CD8-positive, alpha-beta T cell (primary cell): ENCODE measurements at regions of chr14 and their contacts with region 1.

Region 1: DNA sequence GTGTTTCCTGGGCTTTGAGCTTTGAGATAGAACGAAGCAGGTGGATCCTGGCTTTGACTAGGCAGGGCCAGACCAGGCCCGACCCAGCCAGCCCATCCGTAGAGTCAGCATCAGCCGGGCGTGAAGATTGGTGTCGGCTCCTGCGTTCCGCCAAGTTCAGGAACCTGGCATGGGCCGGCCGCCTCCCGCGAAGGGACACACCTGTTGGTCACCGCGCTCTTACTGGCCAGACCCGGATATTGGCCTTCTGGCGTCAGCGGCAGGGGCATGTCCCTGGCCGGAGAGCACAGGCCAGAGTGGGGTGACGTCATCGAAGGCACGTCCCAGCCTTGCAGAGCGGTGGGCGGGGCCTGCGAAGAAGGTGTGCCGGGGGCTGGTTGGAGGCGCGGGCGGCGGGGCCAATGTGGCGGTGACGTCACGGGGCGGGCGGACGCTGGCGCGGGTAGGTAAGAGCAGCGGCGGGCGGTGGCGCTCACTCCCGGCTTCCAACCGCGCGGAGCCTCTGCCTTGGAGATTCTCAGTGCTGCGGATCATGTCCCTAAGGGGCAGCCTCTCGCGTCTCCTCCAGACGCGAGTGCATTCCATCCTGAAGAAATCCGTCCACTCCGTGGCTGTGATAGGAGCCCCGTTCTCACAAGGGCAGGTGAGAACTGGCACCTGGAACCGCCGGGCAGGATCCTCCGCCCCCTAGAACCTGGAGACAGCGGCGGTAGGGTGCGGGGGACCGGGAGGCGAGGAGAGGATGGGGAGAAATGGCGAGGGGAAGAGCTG is at the start of gene ARG2:
- DNase-seq: peak; percentile 92 to 99 (median 97)
- ATAC-seq: peak; percentile 89
- H3K4me3 ChIP-seq: peak within 1 kb of the TSS; percentile 73 to 90
- H3K4me3 Mint-ChIP-seq: peak within 1 kb of the TSS; percentile 88
- H3K27ac ChIP-seq: peak within 1 kb of the TSS; percentile 78 to 86
- H3K27ac Mint-ChIP-seq: peak within 1 kb of the TSS; percentile 86
- H3K4me1 ChIP-seq: peaks cover 17% of the 10 kb centered on the region
- H3K4me1 Mint-ChIP-seq: peaks cover 32% of the 10 kb centered on the region
- H3K27me3 ChIP-seq: no peaks in the 10 kb centered on the region
- H3K27me3 Mint-ChIP-seq: peaks cover 2% of the 10 kb centered on the region
- CTCF ChIP-seq: no peak
- total RNA-seq, gene ARG2: 1.5 to 3.7 TPM

Region 2: DNA sequence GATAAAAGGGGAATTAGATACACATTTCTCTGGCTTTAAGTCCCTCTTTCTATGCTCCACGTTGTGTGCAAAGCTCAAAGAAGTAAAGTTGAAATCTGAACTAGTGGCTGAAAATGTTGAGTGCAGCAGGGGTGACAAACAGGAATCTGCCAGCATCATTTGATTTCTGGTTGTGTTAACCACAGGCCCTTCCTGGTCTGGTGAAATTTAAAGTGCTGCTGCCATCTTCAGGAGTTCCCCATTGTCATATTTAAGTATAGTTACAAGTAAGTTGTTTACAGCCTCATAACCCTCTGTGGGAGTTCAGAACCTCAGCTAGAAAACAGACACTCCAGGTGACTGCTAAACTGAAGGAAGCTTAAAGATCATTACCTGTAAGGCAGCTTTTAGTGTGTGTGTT is 1224.3 kb before region 1 on chr14:
- CTCF ChIA-PET with region 1: no interaction called
- POLR2A ChIA-PET with region 1: no interaction called
- intact Hi-C with region 1: no loop called
- DNase-seq: peak in 2 of 9 experiments; percentile 52 to 70
- ATAC-seq: peak; percentile 59
- H3K4me3 ChIP-seq: no peak overlapping the region
- H3K4me3 Mint-ChIP-seq: no peak overlapping the region
- H3K27ac ChIP-seq: no peak overlapping the region
- H3K27ac Mint-ChIP-seq: peak overlapping the region; percentile 30
- H3K4me1 ChIP-seq: peaks cover 5% of the 10 kb centered on the region
- H3K4me1 Mint-ChIP-seq: peaks cover 6% of the 10 kb centered on the region
- H3K27me3 ChIP-seq: no peaks in the 10 kb centered on the region
- H3K27me3 Mint-ChIP-seq: no peaks in the 10 kb centered on the region
- CTCF ChIP-seq: no peak

Region 3: GRCh38 chr14:67240978-67241414 is 378.6 kb before region 1 on chr14:
- CTCF ChIA-PET with region 1: no interaction called
- POLR2A ChIA-PET with region 1: no interaction called
- intact Hi-C with region 1: loop called in 1 of 2 experiments (anchors 5 kb)
- DNase-seq: peak; percentile 81 to 96 (median 91)
- ATAC-seq: peak; percentile 93
- H3K4me3 ChIP-seq: peak overlapping the region; percentile 65 to 76
- H3K4me3 Mint-ChIP-seq: peak overlapping the region; percentile 91
- H3K27ac ChIP-seq: peak overlapping the region; percentile 62
- H3K27ac Mint-ChIP-seq: peak overlapping the region; percentile 82
- H3K4me1 ChIP-seq: peaks cover 14% of the 10 kb centered on the region
- H3K4me1 Mint-ChIP-seq: peaks cover 29% of the 10 kb centered on the region
- H3K27me3 ChIP-seq: no peaks in the 10 kb centered on the region
- H3K27me3 Mint-ChIP-seq: no peaks in the 10 kb centered on the region
- CTCF ChIP-seq: no peak

Region 4: DNA sequence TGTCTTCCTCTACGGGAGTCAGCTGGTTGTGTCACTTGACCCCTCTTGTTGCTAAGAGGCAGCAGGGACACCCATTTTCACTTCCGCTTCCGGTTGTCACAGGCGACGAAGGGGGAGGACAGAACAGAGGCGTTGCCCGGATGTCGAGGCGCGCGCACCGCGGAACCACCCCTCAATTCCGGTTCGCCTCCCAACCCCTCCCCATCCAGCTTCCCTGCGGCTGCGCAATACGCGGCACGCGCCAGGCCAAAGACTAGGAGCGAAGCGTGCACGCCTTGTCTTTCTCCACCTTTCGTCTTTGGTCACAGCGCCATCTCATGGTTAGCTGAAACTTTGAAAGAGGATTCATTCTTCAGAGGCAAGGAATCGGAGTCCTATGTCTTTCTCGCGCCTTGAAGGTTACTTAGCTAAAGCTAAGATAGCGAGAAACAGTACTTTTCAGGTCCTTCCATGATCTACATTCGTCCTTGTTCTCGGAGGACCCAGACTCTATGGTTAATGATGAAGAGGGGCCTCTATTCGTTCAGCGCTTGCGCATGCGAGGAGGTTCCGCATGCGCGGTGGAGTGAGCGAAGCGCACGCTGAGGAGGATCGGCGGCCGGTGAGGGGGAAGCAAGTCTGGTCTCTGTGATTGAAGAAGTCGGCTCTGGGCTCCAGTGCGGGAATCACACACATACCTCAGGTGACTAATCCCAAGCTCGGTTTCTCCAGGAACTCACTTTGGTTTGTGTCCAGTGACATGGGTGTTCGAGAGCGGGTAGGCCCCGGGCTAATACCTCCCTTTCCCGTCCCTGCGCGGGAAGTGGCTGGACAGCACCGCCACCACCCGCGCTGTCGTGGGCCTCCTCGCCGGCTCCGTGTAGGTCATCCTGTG is 259.6 kb before region 1 on chr14 and contains the starts of genes ATP6V1D and EIF2S1:
- CTCF ChIA-PET with region 1: no interaction called
- POLR2A ChIA-PET with region 1: no interaction called
- intact Hi-C with region 1: loop called in 1 of 2 experiments (anchors 1 kb)
- DNase-seq: peak; percentile 99 to 100 (median 99)
- ATAC-seq: peak; percentile 93
- H3K4me3 ChIP-seq: peak within 1 kb of the TSS; percentile 79 to 87
- H3K4me3 Mint-ChIP-seq: peak within 1 kb of the TSS; percentile 99
- H3K27ac ChIP-seq: peak within 1 kb of the TSS; percentile 83 to 93
- H3K27ac Mint-ChIP-seq: peak within 1 kb of the TSS; percentile 97
- H3K4me1 ChIP-seq: peaks cover 29% of the 10 kb centered on the region
- H3K4me1 Mint-ChIP-seq: peaks cover 80% of the 10 kb centered on the region
- H3K27me3 ChIP-seq: no peaks in the 10 kb centered on the region
- H3K27me3 Mint-ChIP-seq: no peaks in the 10 kb centered on the region
- CTCF ChIP-seq: peak; percentile 99
- total RNA-seq, gene ATP6V1D: 30.1 to 34.2 TPM
- total RNA-seq, gene EIF2S1: 29.4 to 34.4 TPM

Region 5: GRCh38 chr14:67514650-67515385 is 104.8 kb before region 1 on chr14:
- CTCF ChIA-PET with region 1: no interaction called
- POLR2A ChIA-PET with region 1: no interaction called
- intact Hi-C with region 1: loop called in 1 of 2 experiments (anchors 5 kb)
- DNase-seq: peak in 8 of 9 experiments; percentile 11 to 75 (median 43)
- ATAC-seq: peak; percentile 71
- H3K4me3 ChIP-seq: peak overlapping the region; percentile 71 to 75
- H3K4me3 Mint-ChIP-seq: peak overlapping the region; percentile 91
- H3K27ac ChIP-seq: peak overlapping the region; percentile 62 to 79
- H3K27ac Mint-ChIP-seq: peak overlapping the region; percentile 89
- H3K4me1 ChIP-seq: peaks cover 16% of the 10 kb centered on the region
- H3K4me1 Mint-ChIP-seq: peaks cover 36% of the 10 kb centered on the region
- H3K27me3 ChIP-seq: no peaks in the 10 kb centered on the region
- H3K27me3 Mint-ChIP-seq: no peaks in the 10 kb centered on the region
- CTCF ChIP-seq: no peak

Region 6: GRCh38 chr14:67557126-67557525 is 62.5 kb before region 1 on chr14:
- CTCF ChIA-PET with region 1: no interaction called
- POLR2A ChIA-PET with region 1: no interaction called
- intact Hi-C with region 1: no loop called
- DNase-seq: no peak
- ATAC-seq: no peak
- H3K4me3 ChIP-seq: no peak overlapping the region
- H3K4me3 Mint-ChIP-seq: no peak overlapping the region
- H3K27ac ChIP-seq: no peak overlapping the region
- H3K27ac Mint-ChIP-seq: no peak overlapping the region
- H3K4me1 ChIP-seq: no peaks in the 10 kb centered on the region
- H3K4me1 Mint-ChIP-seq: no peaks in the 10 kb centered on the region
- H3K27me3 ChIP-seq: no peaks in the 10 kb centered on the region
- H3K27me3 Mint-ChIP-seq: no peaks in the 10 kb centered on the region
- CTCF ChIP-seq: no peak

Region 7: GRCh38 chr14:67599698-67600561 is 19.7 kb before region 1 on chr14 and contains the start of gene PIGH:
- CTCF ChIA-PET with region 1: interaction called, 11 read pairs
- POLR2A ChIA-PET with region 1: interaction called, 15 read pairs
- intact Hi-C with region 1: loop called (anchors 1 to 2 kb)
- DNase-seq: peak; percentile 90 to 97 (median 94)
- ATAC-seq: peak; percentile 97
- H3K4me3 ChIP-seq: peak within 1 kb of the TSS; percentile 92 to 99
- H3K4me3 Mint-ChIP-seq: peak within 1 kb of the TSS; percentile 98
- H3K27ac ChIP-seq: peak within 1 kb of the TSS; percentile 74 to 87
- H3K27ac Mint-ChIP-seq: peak within 1 kb of the TSS; percentile 98
- H3K4me1 ChIP-seq: peaks cover 19% of the 10 kb centered on the region
- H3K4me1 Mint-ChIP-seq: peaks cover 49% of the 10 kb centered on the region
- H3K27me3 ChIP-seq: no peaks in the 10 kb centered on the region
- H3K27me3 Mint-ChIP-seq: no peaks in the 10 kb centered on the region
- CTCF ChIP-seq: peak; percentile 52
- total RNA-seq, gene PIGH: 66.0 to 67.8 TPM

Region 8: GRCh38 chr14:67666750-67667449 is 47.3 kb after region 1 on chr14:
- CTCF ChIA-PET with region 1: interaction called, 18 read pairs
- POLR2A ChIA-PET with region 1: interaction called, 3 read pairs
- intact Hi-C with region 1: loop called (anchors 1 kb)
- DNase-seq: peak in 4 of 9 experiments; percentile 26 to 76 (median 46)
- ATAC-seq: peak; percentile 91
- H3K4me3 ChIP-seq: no peak overlapping the region
- H3K4me3 Mint-ChIP-seq: no peak overlapping the region
- H3K27ac ChIP-seq: peak overlapping the region in 1 of 2 experiments; percentile 21
- H3K27ac Mint-ChIP-seq: no peak overlapping the region
- H3K4me1 ChIP-seq: peaks cover 25% of the 10 kb centered on the region
- H3K4me1 Mint-ChIP-seq: peaks cover 60% of the 10 kb centered on the region
- H3K27me3 ChIP-seq: no peaks in the 10 kb centered on the region
- H3K27me3 Mint-ChIP-seq: no peaks in the 10 kb centered on the region
- CTCF ChIP-seq: peak; percentile 61

Region 9: DNA sequence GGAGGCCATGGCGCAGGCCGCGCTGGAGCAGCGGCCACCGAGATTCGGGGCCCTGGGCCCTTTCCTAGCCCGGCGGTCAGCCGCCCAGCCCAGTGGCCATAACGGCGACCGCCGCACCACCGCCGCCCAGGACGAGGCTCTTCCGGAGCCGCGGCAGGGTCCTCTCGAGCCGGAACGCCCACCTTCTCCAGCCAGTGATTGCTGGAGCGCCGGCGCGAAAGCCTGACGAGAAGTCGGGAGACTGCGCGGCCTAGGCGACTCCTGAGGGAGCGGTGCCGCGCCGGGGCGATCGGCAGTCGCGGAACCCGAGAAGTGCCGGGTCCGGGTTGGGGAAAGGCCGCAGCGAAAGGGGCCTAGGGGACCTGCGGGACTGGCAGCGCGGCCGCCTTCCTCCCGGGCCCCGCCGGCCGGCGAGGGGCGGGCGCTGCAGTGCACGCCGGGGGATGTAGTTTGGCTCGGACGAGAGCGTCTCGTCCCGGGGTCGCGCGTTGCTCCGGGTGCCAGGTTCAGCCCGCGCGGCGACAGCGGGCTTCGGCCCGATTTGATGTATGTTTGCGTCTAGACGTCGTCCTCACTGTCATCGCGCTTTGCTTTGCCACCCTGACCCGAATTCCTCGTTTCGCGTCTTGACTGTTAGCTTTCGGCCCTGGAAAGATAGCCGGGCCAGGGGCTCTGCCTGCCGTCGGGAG is 55.0 kb after region 1 on chr14 and contains the start of gene VTI1B:
- CTCF ChIA-PET with region 1: interaction called, 5 read pairs
- POLR2A ChIA-PET with region 1: interaction called, 3 read pairs
- intact Hi-C with region 1: loop called (anchors 1 to 2 kb)
- DNase-seq: peak; percentile 64 to 89 (median 79)
- ATAC-seq: peak; percentile 92
- H3K4me3 ChIP-seq: peak within 1 kb of the TSS; percentile 78 to 82
- H3K4me3 Mint-ChIP-seq: peak within 1 kb of the TSS; percentile 94
- H3K27ac ChIP-seq: peak within 1 kb of the TSS; percentile 93 to 95
- H3K27ac Mint-ChIP-seq: peak within 1 kb of the TSS; percentile 93
- H3K4me1 ChIP-seq: peaks cover 32% of the 10 kb centered on the region
- H3K4me1 Mint-ChIP-seq: peaks cover 39% of the 10 kb centered on the region
- H3K27me3 ChIP-seq: no peaks in the 10 kb centered on the region
- H3K27me3 Mint-ChIP-seq: no peaks in the 10 kb centered on the region
- CTCF ChIP-seq: no peak
- total RNA-seq, gene VTI1B: 27.6 to 31.1 TPM